Pancreas (tissue), 10 donors: ENCODE measurements at regions of chr4 and their contacts with region 1.

Region 1: GRCh38 chr4:40744218-40744617 is 5.5 kb upstream of the NSUN7 start:
- DNase-seq: no peak
- ATAC-seq: no peak
- H3K4me3 ChIP-seq: no peak overlapping the region
- H3K27ac ChIP-seq: no peak overlapping the region
- H3K4me1 ChIP-seq: peaks cover 0 to 4% (median 0%) of the 10 kb centered on the region in 3 donors
- H3K27me3 ChIP-seq: no peaks in the 10 kb centered on the region
- CTCF ChIP-seq: no peak

Region 2: DNA sequence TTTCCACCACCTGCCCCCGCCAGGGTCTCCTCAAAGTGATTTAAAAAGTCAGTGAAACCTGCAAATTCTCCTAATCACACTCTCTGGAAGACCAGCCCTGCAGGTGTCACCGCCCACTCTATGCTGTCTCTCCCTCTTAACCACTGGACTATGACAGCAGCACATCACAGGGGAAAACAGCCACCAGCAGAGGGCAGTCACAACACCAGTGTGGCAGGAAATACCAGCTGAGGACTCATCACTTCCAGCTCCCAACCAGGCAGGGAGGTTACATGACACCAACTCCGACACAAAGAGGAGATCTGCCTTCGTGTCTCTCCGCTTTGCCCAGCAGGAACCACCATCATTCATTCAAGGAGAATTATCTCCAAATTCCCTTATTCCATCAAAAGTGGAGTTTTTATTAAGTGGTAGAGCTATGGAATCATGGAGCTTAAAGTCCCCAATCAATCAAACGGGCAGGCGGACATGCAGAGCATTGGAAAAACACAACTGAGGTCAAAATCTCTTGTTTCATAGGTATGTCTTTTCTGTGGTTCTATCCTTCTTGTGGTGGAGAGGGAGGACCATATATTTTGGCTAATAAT is 96.9 kb after region 1 on chr4:
- intact Hi-C with region 1: loop called in 1 of 3 experiments (anchors 5 kb)
- DNase-seq: peak in 5 of 6 donors; percentile 29 to 78 (median 59)
- ATAC-seq: peak; percentile 48 to 87 (median 83)
- H3K4me3 ChIP-seq: no peak overlapping the region
- H3K27ac ChIP-seq: no peak overlapping the region
- H3K4me1 ChIP-seq: no peaks in the 10 kb centered on the region
- H3K27me3 ChIP-seq: no peaks in the 10 kb centered on the region
- CTCF ChIP-seq: peak; percentile 10 to 50 (median 40)